OCI-LY7 (cell line): ENCODE measurements at regions of chr2 and their contacts with region 1.

Region 1: GRCh38 chr2:28821295-28821958 is 10.8 kb downstream of the SPDYA start:
- DNase-seq: peak; percentile 65
- H3K4me3 ChIP-seq: no peak overlapping the region
- H3K27ac ChIP-seq: no peak overlapping the region
- H3K4me1 ChIP-seq: no peaks in the 10 kb centered on the region
- CTCF ChIP-seq: peak; percentile 79

Region 2: GRCh38 chr2:28952816-28953211 is 131.4 kb after region 1 on chr2:
- CTCF ChIA-PET with region 1: no interaction called
- POLR2A ChIA-PET with region 1: no interaction called
- intact Hi-C with region 1: loop called (anchors 2 kb)
- DNase-seq: peak; percentile 27
- H3K4me3 ChIP-seq: no peak overlapping the region
- H3K27ac ChIP-seq: no peak overlapping the region
- H3K4me1 ChIP-seq: no peaks in the 10 kb centered on the region
- CTCF ChIP-seq: peak; percentile 44

Region 3: GRCh38 chr2:29174937-29175336 is 353.5 kb after region 1 on chr2:
- CTCF ChIA-PET with region 1: no interaction called
- POLR2A ChIA-PET with region 1: no interaction called
- intact Hi-C with region 1: no loop called
- DNase-seq: no peak
- H3K4me3 ChIP-seq: no peak overlapping the region
- H3K27ac ChIP-seq: no peak overlapping the region
- H3K4me1 ChIP-seq: no peaks in the 10 kb centered on the region
- CTCF ChIP-seq: no peak